PC-3 (cell line): ENCODE measurements at regions of chr20 and their contacts with region 1.

Region 1: DNA sequence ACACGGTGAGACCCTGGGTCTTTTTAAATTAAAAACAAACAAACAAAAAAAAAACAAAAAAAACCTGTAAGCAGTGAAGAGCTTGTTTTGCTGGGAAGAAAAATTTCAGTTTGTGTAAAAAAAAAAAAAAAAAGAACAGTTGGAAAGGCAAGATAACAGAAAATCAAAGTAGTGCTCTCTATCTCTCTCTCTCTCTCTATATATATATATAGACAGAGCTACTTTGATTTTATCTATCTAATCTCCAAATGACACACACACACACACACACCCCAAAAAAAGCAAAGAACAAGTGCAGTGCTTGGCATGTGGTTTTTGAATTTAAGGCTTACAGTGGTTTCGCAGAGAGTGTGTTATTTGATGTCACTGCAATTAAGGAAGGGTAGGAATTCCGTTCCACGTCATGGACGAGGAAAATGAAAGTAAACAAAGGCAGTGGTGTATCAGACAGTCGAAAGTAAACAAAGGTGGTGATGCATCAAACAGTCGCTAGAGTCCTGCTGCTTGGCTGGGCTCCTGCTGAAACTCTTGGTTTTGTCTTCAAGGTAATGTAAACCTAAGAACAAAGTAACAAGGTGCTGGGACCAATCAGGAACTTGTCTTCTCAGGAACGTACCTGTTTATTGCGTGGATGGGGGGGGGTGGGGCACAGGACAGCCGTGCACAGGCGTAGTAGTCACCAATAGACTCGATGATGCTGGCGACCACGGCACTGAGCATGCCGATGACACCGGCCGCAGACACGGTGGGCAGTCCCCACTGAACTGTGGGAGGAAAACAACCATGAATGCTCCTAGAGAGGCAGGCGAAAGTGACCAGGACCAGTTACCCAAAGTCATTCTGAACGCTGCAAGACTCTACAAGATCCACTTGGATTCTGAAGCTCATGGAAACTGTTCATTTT is 131.8 kb downstream of the SLC23A2 start:
- DNase-seq: peak; percentile 92
- ATAC-seq: peak; percentile 97
- H3K4me3 ChIP-seq: peak overlapping the region; percentile 56
- H3K27ac ChIP-seq: peak overlapping the region; percentile 82
- H3K4me1 ChIP-seq: peaks cover 25% of the 10 kb centered on the region
- H3K27me3 ChIP-seq: no peaks in the 10 kb centered on the region
- CTCF ChIP-seq: no peak

Region 2: DNA sequence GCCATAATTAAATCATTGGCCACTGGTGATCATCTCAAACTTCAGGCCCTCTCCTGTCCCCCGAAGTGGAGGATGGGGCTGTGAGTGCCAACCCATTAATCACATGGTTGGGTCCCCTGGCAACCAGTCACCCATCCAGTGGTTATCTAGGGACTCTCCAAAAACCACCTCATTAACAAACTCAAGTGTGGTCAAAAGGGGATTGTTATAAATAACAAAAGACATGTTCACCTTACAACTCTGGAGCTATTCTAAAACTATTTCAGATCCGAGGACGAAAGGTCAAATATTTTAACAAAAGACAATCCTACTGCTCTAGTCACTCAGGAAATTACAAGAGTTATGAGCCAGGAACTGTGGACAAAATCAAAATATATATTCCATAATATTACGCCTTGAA is 243.3 kb before region 1 on chr20:
- CTCF ChIA-PET with region 1: interaction called, 11 read pairs
- POLR2A ChIA-PET with region 1: no interaction called
- intact Hi-C with region 1: no loop called
- DNase-seq: no peak
- ATAC-seq: no peak
- H3K4me3 ChIP-seq: no peak overlapping the region
- H3K27ac ChIP-seq: no peak overlapping the region
- H3K4me1 ChIP-seq: no peaks in the 10 kb centered on the region
- H3K27me3 ChIP-seq: no peaks in the 10 kb centered on the region
- CTCF ChIP-seq: no peak

Region 3: GRCh38 chr20:4916971-4917881 is 47.7 kb after region 1 on chr20:
- CTCF ChIA-PET with region 1: no interaction called
- POLR2A ChIA-PET with region 1: no interaction called
- intact Hi-C with region 1: no loop called
- DNase-seq: peak; percentile 23
- ATAC-seq: peak; percentile 70
- H3K4me3 ChIP-seq: no peak overlapping the region
- H3K27ac ChIP-seq: no peak overlapping the region
- H3K4me1 ChIP-seq: no peaks in the 10 kb centered on the region
- H3K27me3 ChIP-seq: no peaks in the 10 kb centered on the region
- CTCF ChIP-seq: no peak

Region 4: DNA sequence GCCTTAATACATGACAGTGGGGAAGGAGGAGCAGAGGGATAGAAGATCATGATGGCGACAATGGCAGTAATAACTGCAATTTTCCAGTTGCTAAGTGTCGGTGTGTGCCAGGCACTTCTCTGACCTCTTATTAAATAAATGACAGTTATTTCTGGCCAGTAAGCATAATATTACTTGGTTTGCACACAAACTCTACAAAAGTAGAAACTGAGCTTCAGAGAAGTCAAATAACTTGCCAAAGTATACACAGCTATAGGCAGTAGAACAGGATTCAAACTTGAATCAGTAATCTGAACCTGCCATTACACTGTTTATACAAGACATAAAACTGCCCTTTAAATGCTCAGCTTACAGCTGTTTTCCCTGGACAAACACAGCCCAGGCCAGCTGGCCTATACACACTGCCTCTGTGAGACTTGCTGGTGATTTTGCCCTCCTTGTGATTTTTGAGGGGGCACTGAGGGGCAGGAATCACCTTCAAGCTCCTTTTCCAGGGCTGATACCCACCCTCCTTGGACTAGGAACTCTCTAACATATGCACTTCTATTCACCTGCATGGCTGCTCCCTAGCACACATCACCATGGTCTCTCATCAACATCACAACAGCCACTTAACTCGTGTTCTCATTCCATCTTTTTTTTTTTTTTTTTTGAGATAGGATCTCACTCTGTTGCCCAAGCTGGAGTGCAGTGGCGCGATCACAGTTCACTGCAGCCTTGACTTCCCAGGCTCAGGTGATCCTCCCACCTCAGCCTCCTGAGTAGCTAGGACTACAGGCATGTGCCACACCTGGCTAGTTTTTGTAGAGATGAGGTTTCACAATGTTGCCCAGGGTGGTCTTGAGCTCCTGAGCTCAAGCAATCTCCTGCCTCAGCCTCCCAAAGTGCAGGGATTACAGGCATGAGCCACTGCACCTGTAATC is 68.1 kb after region 1 on chr20:
- CTCF ChIA-PET with region 1: no interaction called
- POLR2A ChIA-PET with region 1: no interaction called
- intact Hi-C with region 1: loop called (anchors 5 kb)
- DNase-seq: peak; percentile 57
- ATAC-seq: peak; percentile 100
- H3K4me3 ChIP-seq: no peak overlapping the region
- H3K27ac ChIP-seq: no peak overlapping the region
- H3K4me1 ChIP-seq: peaks cover 11% of the 10 kb centered on the region; the same call in 1 of the 2 replicates
- H3K27me3 ChIP-seq: no peaks in the 10 kb centered on the region
- CTCF ChIP-seq: no peak